Activated CD4-positive, alpha-beta T cell treated with anti-CD3 and anti-CD28 coated beads, Interleukin-2, amount 10 ng/mL, durations not matched to agents 7 days and 5 days (primary cell): ENCODE measurements at regions of chr21 and their contacts with region 1.

Region 1: DNA sequence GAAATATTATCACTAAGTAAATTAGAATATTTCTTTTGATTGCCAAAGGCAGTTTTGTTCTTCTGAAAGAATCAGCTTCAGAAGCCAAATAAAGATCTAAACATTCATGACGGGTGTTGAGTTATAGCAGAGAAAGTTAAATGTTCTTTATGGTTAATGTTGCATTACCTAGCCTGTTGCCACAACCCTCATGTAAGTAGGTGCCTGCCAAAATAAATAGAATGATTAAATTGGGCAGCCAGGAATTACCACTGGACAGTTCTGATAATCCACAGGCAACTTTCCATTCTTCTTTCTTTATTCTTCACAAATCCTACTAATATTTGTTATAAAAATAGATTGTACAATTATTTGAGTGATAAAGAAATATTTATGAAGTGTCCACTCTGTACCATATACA is 217.9 kb upstream of the NRIP1 start:
- DNase-seq: no peak
- H3K4me3 Mint-ChIP-seq: no peak overlapping the region
- H3K27ac Mint-ChIP-seq: no peak overlapping the region
- H3K4me1 Mint-ChIP-seq: no peaks in the 10 kb centered on the region
- H3K27me3 Mint-ChIP-seq: no peaks in the 10 kb centered on the region

Region 2: DNA sequence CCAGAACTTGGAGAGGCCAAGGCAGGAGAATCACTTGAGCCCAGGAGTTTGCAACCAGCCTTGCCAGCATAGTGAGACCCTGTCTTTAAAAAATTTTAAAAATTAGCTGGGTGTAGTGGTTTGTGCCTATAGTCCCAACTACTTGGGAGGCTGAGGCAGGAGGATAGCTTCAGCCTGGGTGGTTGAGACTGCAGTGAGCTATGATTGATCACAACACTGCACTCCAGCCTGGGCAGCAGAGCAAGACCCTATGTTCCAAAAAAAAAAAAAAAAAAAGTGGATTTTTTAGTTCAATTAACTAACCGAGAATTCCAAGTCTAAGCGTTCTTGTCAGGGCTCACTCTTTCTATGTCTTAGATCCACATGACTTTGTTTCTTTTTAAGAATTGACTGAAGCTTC is 87.6 kb before region 1 on chr21:
- CTCF ChIA-PET with region 1: no interaction called
- POLR2A ChIA-PET with region 1: interaction called, 10 read pairs
- DNase-seq: no peak
- H3K4me3 Mint-ChIP-seq: no peak overlapping the region
- H3K27ac Mint-ChIP-seq: no peak overlapping the region
- H3K4me1 Mint-ChIP-seq: no peaks in the 10 kb centered on the region
- H3K27me3 Mint-ChIP-seq: peaks cover 1% of the 10 kb centered on the region

Region 3: GRCh38 chr21:15552914-15553494 is 270.3 kb after region 1 on chr21:
- CTCF ChIA-PET with region 1: no interaction called
- POLR2A ChIA-PET with region 1: no interaction called
- DNase-seq: no peak
- H3K4me3 Mint-ChIP-seq: no peak overlapping the region
- H3K27ac Mint-ChIP-seq: no peak overlapping the region
- H3K4me1 Mint-ChIP-seq: peaks cover 8% of the 10 kb centered on the region
- H3K27me3 Mint-ChIP-seq: no peaks in the 10 kb centered on the region